ENCODE measurements at regions of chr4 and their contacts with region 1.

Region 1: GRCh38 chr4:146004730-146005129 is 66.1 kb upstream of the ZNF827 start:
- DNase-seq: no peak
- H3K4me3 ChIP-seq: no peak overlapping the region
- H3K27ac ChIP-seq: no peak overlapping the region
- H3K4me1 ChIP-seq: no peaks in the 10 kb centered on the region
- H3K27me3 ChIP-seq: no peaks in the 10 kb centered on the region
- CTCF ChIP-seq: no peak
- POLR2A ChIP-seq: no peak

Region 2: DNA sequence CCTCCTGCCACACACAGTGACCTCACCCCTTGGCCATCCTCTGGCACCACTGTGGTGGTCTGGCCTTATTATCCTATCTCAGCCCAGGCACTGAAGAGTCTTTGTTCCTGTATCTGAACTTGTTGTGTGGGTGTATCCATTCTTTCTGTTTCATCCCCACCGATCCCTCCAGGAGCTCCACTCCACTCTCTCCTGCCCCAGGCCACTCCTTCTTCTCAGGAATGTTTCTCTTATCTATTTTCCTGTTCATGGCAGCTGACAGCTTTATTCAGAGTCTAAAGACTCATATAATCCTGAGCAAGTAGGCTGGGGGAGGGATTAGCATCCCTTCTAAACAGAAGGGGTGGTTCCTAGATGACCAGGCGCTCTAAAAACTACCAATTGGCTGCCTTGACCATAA is 1056.7 kb before region 1 on chr4:
- CTCF ChIA-PET with region 1: no interaction called
- POLR2A ChIA-PET with region 1: interaction called, 12 read pairs
- dilution Hi-C with region 1: no loop called
- intact Hi-C with region 1: no loop called
- DNase-seq: no peak
- H3K4me3 ChIP-seq: no peak overlapping the region
- H3K27ac ChIP-seq: no peak overlapping the region
- H3K4me1 ChIP-seq: no peaks in the 10 kb centered on the region
- H3K27me3 ChIP-seq: no peaks in the 10 kb centered on the region
- CTCF ChIP-seq: no peak
- POLR2A ChIP-seq: no peak

Region 3: DNA sequence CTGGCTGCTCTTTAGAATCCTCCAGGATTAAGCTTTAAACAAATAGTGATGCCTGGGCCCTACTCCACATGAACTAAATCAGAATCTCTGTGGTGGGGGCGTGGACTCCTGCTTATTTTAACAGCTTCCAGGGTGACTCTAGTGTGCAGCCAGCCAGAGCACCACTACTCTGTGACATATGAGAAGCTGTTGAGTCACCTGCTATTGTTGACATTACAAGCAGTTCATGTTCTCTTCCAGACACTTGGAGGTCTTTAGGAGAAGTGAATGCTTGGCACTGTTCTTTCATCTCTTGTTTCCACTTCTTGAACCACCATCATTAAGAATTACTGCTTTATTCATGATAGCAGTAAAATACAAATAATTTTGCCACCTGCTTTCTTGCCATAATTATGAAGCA is 325.2 kb before region 1 on chr4:
- CTCF ChIA-PET with region 1: no interaction called
- POLR2A ChIA-PET with region 1: no interaction called
- dilution Hi-C with region 1: no loop called
- intact Hi-C with region 1: no loop called
- DNase-seq: peak; percentile 66
- H3K4me3 ChIP-seq: no peak overlapping the region
- H3K27ac ChIP-seq: peak overlapping the region; percentile 13
- H3K4me1 ChIP-seq: peaks cover 10% of the 10 kb centered on the region
- H3K27me3 ChIP-seq: no peaks in the 10 kb centered on the region
- CTCF ChIP-seq: no peak
- POLR2A ChIP-seq: no peak

Region 4: DNA sequence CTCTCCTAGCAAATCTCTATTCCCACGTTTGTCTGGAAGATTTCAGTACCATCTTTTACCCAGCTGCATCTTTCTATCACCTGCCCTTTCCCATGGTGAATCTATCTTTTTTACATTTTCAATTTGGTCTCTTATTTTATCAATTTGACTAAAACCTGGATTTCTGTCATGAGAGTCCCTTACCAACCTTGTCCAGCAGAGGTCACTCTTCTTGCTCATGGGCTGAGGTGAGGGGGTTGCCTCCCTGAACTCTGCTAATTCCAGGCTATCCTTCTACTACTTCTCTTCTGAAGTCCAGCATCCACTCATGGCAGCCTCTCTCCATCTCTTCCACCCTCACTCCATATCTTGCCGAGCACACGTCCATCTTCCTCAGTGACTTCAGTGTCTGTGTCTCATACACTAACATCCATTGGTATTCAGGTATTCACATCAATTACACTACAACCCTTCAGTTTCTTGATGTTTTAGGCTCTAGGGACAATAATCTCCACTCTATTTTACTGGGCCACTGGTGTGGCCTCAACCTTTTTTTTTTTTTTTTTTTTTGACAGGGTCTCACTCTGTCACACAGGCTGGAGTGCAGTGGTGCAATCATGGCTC is 48.3 kb before region 1 on chr4:
- CTCF ChIA-PET with region 1: no interaction called
- POLR2A ChIA-PET with region 1: no interaction called
- dilution Hi-C with region 1: no loop called
- intact Hi-C with region 1: no loop called
- DNase-seq: peak; percentile 43
- H3K4me3 ChIP-seq: no peak overlapping the region
- H3K27ac ChIP-seq: no peak overlapping the region
- H3K4me1 ChIP-seq: peaks cover 10% of the 10 kb centered on the region
- H3K27me3 ChIP-seq: no peaks in the 10 kb centered on the region
- CTCF ChIP-seq: peak; percentile 68 to 77
- POLR2A ChIP-seq: no peak

Measured in endothelial cell of umbilical vein (primary cell).